CD8-positive, alpha-beta T cell (primary cell): ENCODE measurements at regions of chr6 and their contacts with region 1.

Region 1: DNA sequence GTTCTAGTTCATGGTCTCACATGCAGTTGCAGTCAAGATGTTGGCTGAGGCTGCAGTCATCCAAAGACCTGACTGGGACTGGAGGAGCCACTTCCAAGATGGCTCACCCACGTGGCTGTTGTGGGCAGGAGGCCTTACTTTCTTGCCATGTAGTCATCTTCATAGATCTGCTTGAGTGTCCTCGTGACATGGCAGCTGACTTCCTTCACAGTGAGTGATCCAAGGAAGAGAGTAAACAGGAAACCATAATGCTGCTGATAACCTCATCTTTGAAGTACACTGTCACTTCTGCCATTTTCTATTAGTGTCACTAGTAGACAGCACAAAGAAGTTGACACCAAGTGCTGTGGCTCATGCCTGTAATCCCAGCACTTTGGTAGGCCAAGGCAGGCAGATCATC is 40.1 kb upstream of the AKIRIN2 start:
- DNase-seq: peak; percentile 14 to 85 (median 58)
- ATAC-seq: peak; percentile 88
- H3K4me3 ChIP-seq: no peak overlapping the region
- H3K4me3 Mint-ChIP-seq: no peak overlapping the region
- H3K27ac ChIP-seq: peak overlapping the region in 1 of 2 experiments; percentile 59
- H3K27ac Mint-ChIP-seq: peak overlapping the region; percentile 72
- H3K4me1 ChIP-seq: peaks cover 9% of the 10 kb centered on the region
- H3K4me1 Mint-ChIP-seq: peaks cover 35% of the 10 kb centered on the region
- H3K27me3 ChIP-seq: no peaks in the 10 kb centered on the region
- H3K27me3 Mint-ChIP-seq: no peaks in the 10 kb centered on the region
- CTCF ChIP-seq: no peak

Region 2: GRCh38 chr6:87789198-87789899 is 47.2 kb after region 1 on chr6:
- CTCF ChIA-PET with region 1: no interaction called
- POLR2A ChIA-PET with region 1: no interaction called
- intact Hi-C with region 1: loop called in 1 of 2 experiments (anchors 1 kb)
- DNase-seq: peak in 1 of 9 experiments; percentile 22
- ATAC-seq: no peak
- H3K4me3 ChIP-seq: no peak overlapping the region
- H3K4me3 Mint-ChIP-seq: no peak overlapping the region
- H3K27ac ChIP-seq: no peak overlapping the region
- H3K27ac Mint-ChIP-seq: no peak overlapping the region
- H3K4me1 ChIP-seq: no peaks in the 10 kb centered on the region
- H3K4me1 Mint-ChIP-seq: no peaks in the 10 kb centered on the region
- H3K27me3 ChIP-seq: no peaks in the 10 kb centered on the region
- H3K27me3 Mint-ChIP-seq: peaks cover 2% of the 10 kb centered on the region
- CTCF ChIP-seq: no peak